Activated CD8-positive, alpha-beta T cell treated with anti-CD3 and anti-CD28 coated beads for 36 hours (primary cell): ENCODE measurements at regions of chr1 and their contacts with region 1.

Region 1: DNA sequence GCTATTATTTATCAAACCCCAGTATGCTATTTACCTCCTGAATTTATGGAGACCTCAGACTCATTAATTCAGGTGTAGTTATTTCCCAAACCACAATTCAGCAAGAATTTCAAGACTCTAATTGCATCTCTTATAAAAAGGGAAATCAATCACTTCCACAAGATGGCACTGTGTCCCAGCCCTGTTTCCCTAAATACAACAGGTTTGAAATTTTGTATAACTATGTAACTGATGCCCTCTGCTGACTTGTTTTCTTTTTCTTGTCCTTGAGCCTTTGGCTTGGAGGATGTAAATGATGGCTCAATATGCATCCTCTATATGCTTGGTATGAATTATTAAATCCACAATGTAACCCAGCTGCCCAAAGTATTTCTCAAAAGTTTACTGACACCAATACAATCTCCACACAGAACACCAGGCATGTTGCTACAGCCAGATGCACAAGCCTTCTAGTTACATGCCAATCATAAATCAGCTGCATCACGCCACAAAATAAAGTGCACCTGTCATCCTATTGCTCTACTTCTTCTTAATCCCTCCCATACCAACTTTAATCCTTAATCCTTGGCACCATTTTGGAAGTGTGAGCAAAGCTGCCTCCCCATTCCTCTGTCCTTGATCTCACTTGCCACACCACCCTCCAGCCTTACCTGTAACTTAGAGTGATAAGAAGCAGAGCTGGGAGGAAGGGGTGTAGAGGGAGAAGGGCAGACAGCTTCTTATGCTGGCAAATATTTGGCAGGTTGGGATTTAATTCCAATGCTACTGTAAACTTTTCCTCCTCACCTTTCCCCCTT is 9.0 kb downstream of the C1orf105 start:
- DNase-seq: peak; percentile 76
- ATAC-seq: peak; percentile 65
- H3K4me3 Mint-ChIP-seq: no peak overlapping the region
- H3K27ac Mint-ChIP-seq: peak overlapping the region; percentile 26
- H3K4me1 Mint-ChIP-seq: peaks cover 40% of the 10 kb centered on the region
- H3K27me3 Mint-ChIP-seq: no peaks in the 10 kb centered on the region
- CTCF ChIP-seq: peak; percentile 75

Region 2: DNA sequence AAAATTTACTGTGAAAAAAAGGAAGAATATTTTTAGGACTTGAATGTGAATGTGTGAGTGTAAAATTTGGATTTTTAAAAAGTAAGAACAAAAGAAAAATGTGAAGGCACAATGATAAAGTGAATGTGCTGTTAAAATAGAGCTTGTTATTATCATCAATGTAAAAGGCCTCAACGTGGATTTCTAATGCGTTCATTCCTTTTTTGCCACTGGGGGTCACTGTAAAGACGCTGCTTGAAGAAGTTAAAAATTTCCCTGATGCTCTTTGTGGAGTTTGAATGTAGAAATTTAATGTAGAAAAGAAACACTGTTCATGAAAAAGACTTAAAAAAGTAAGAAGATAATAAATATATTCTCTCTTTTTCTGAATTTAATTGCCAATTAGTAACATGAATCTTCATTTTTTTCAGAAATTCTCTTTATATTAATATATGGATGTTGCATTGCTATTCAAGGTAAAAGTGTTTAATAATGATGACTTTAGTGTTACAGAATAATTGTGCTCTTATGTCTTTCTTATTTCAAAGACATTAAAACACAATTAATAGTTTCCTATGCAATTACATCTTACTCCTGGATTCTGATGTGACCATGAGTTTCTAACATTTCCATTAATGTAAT is 426.7 kb before region 1 on chr1:
- CTCF ChIA-PET with region 1: interaction called, 40 read pairs
- POLR2A ChIA-PET with region 1: no interaction called
- intact Hi-C with region 1: no loop called
- DNase-seq: peak; percentile 42
- ATAC-seq: no peak
- H3K4me3 Mint-ChIP-seq: no peak overlapping the region
- H3K27ac Mint-ChIP-seq: no peak overlapping the region
- H3K4me1 Mint-ChIP-seq: no peaks in the 10 kb centered on the region
- H3K27me3 Mint-ChIP-seq: peaks cover under 1% of the 10 kb centered on the region
- CTCF ChIP-seq: peak; percentile 73

Region 3: DNA sequence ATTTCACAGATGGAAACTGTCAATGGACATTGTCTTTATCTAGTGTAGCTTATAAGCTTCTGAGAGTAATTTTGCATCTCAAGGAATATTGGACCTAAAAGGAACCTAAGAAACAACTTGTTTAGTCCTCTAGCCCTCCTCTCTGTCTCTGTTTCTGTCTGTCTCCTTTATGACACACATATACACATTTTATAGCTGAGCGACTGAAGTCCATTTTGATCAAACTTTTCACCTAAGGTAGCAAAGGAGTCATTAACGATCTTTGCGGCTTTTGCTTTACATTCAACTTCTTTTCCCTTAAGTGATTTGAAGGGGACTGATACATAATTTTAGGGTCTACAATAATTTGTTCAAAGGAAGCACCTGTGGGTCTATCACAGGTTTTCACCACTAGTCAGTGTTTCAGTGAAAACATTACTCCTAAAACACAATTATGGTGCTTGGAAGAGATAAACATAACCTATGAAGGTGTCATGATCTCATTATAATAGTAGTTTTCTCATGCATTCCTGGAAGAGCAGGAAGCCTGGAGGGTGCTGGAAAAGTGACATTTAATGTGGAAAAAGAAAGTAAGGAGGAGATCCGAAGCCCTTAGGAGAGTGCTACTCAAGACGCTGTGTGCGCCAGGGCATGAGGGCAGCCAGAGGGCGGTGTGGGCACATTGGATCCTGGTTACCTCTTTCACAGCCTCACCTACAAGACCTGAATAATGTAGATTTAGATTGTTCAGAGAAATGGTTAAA is 339.6 kb before region 1 on chr1:
- CTCF ChIA-PET with region 1: interaction called, 13 read pairs
- POLR2A ChIA-PET with region 1: no interaction called
- intact Hi-C with region 1: no loop called
- DNase-seq: peak; percentile 82
- ATAC-seq: peak; percentile 90
- H3K4me3 Mint-ChIP-seq: no peak overlapping the region
- H3K27ac Mint-ChIP-seq: no peak overlapping the region
- H3K4me1 Mint-ChIP-seq: peaks cover 1% of the 10 kb centered on the region
- H3K27me3 Mint-ChIP-seq: no peaks in the 10 kb centered on the region
- CTCF ChIP-seq: peak; percentile 83

Region 4: GRCh38 chr1:172380441-172381244 is 48.9 kb before region 1 on chr1:
- CTCF ChIA-PET with region 1: no interaction called
- POLR2A ChIA-PET with region 1: no interaction called
- intact Hi-C with region 1: no loop called
- DNase-seq: peak; percentile 40
- ATAC-seq: peak; percentile 97
- H3K4me3 Mint-ChIP-seq: peak overlapping the region; percentile 57
- H3K27ac Mint-ChIP-seq: peak overlapping the region; percentile 93
- H3K4me1 Mint-ChIP-seq: peaks cover 32% of the 10 kb centered on the region
- H3K27me3 Mint-ChIP-seq: no peaks in the 10 kb centered on the region
- CTCF ChIP-seq: no peak

Region 5: GRCh38 chr1:172414331-172414730 is 15.2 kb before region 1 on chr1:
- CTCF ChIA-PET with region 1: interaction called, 42 read pairs
- POLR2A ChIA-PET with region 1: no interaction called
- intact Hi-C with region 1: no loop called
- DNase-seq: no peak
- ATAC-seq: no peak
- H3K4me3 Mint-ChIP-seq: no peak overlapping the region
- H3K27ac Mint-ChIP-seq: no peak overlapping the region
- H3K4me1 Mint-ChIP-seq: peaks cover 7% of the 10 kb centered on the region
- H3K27me3 Mint-ChIP-seq: no peaks in the 10 kb centered on the region
- CTCF ChIP-seq: no peak

Region 6: GRCh38 chr1:172443626-172444453 is 14.3 kb after region 1 on chr1 and contains the start of gene PIGC:
- CTCF ChIA-PET with region 1: interaction called, 90 read pairs
- POLR2A ChIA-PET with region 1: interaction called, 5 read pairs
- intact Hi-C with region 1: no loop called
- DNase-seq: peak; percentile 94
- ATAC-seq: peak; percentile 99
- H3K4me3 Mint-ChIP-seq: peak within 1 kb of the TSS; percentile 87
- H3K27ac Mint-ChIP-seq: peak within 1 kb of the TSS; percentile 92
- H3K4me1 Mint-ChIP-seq: peaks cover 35% of the 10 kb centered on the region
- H3K27me3 Mint-ChIP-seq: no peaks in the 10 kb centered on the region
- CTCF ChIP-seq: peak; percentile 85
- total RNA-seq, gene PIGC: 17.8 to 19.5 TPM

Region 7: GRCh38 chr1:172449585-172450534 is 20.3 kb after region 1 on chr1:
- CTCF ChIA-PET with region 1: interaction called, 90 read pairs
- POLR2A ChIA-PET with region 1: no interaction called
- intact Hi-C with region 1: no loop called
- DNase-seq: peak; percentile 35
- ATAC-seq: peak; percentile 82
- H3K4me3 Mint-ChIP-seq: no peak overlapping the region
- H3K27ac Mint-ChIP-seq: no peak overlapping the region
- H3K4me1 Mint-ChIP-seq: peaks cover 22% of the 10 kb centered on the region
- H3K27me3 Mint-ChIP-seq: no peaks in the 10 kb centered on the region
- CTCF ChIP-seq: peak; percentile 87